Activated T-helper 1 cell treated with anti-CD3 and anti-CD28 coated beads, Interleukin-12 subunit alpha, Interleukin-12 subunit beta, Interleukin-2, Interleukin-4 antibody, amounts not matched to agents 30 ng/mL and 10 ng/mL and 1 ng/mL, durations not matched to agents 14 hours and 24 hours and 36 hours (primary cell): ENCODE measurements at regions of chr12 and their contacts with region 1.

Region 1: GRCh38 chr12:92928962-92929915 is at the start of gene EEA1:
- DNase-seq: peak; percentile 92
- H3K4me3 Mint-ChIP-seq: peak within 1 kb of the TSS; percentile 89
- H3K27ac Mint-ChIP-seq: peak within 1 kb of the TSS; percentile 96
- H3K4me1 Mint-ChIP-seq: peaks cover 31% of the 10 kb centered on the region
- H3K27me3 Mint-ChIP-seq: peaks cover 13% of the 10 kb centered on the region
- total RNA-seq, gene EEA1: 17.5 and 18.8 TPM in 2 replicates

Region 2: GRCh38 chr12:92208613-92209121 is 720.6 kb before region 1 on chr12:
- intact Hi-C with region 1: loop called (anchors 10 kb)
- DNase-seq: peak; percentile 26
- H3K4me3 Mint-ChIP-seq: peak overlapping the region; percentile 72
- H3K27ac Mint-ChIP-seq: peak overlapping the region; percentile 94
- H3K4me1 Mint-ChIP-seq: peaks cover 46% of the 10 kb centered on the region
- H3K27me3 Mint-ChIP-seq: no peaks in the 10 kb centered on the region

Region 3: GRCh38 chr12:92784795-92785562 is 144.3 kb before region 1 on chr12:
- intact Hi-C with region 1: loop called (anchors 1 kb)
- DNase-seq: peak; percentile 5
- H3K4me3 Mint-ChIP-seq: no peak overlapping the region
- H3K27ac Mint-ChIP-seq: no peak overlapping the region
- H3K4me1 Mint-ChIP-seq: peaks cover 4% of the 10 kb centered on the region
- H3K27me3 Mint-ChIP-seq: no peaks in the 10 kb centered on the region

Region 4: GRCh38 chr12:93243689-93244513 is 314.7 kb after region 1 on chr12:
- intact Hi-C with region 1: loop called (anchors 1 kb)
- DNase-seq: peak; percentile 4
- H3K4me3 Mint-ChIP-seq: peak overlapping the region; percentile 63
- H3K27ac Mint-ChIP-seq: peak overlapping the region; percentile 69
- H3K4me1 Mint-ChIP-seq: peaks cover 59% of the 10 kb centered on the region
- H3K27me3 Mint-ChIP-seq: no peaks in the 10 kb centered on the region

Region 5: GRCh38 chr12:93569656-93570551 is 640.7 kb after region 1 on chr12:
- intact Hi-C with region 1: loop called (anchors 5 kb)
- DNase-seq: peak; percentile 68
- H3K4me3 Mint-ChIP-seq: peak overlapping the region; percentile 88
- H3K27ac Mint-ChIP-seq: peak overlapping the region; percentile 77
- H3K4me1 Mint-ChIP-seq: peaks cover 42% of the 10 kb centered on the region
- H3K27me3 Mint-ChIP-seq: peaks cover 15% of the 10 kb centered on the region

Region 6: GRCh38 chr12:94207849-94208621 is 1278.8 kb after region 1 on chr12:
- intact Hi-C with region 1: loop called (anchors 1 kb)
- DNase-seq: peak; percentile 46
- H3K4me3 Mint-ChIP-seq: peak overlapping the region; percentile 79
- H3K27ac Mint-ChIP-seq: peak overlapping the region; percentile 100
- H3K4me1 Mint-ChIP-seq: peaks cover 73% of the 10 kb centered on the region
- H3K27me3 Mint-ChIP-seq: no peaks in the 10 kb centered on the region